ENCODE measurements at regions of chr6 and their contacts with region 1.

Region 1: GRCh38 chr6:16168858-16169257 is 40.0 kb downstream of the MYLIP start:
- DNase-seq: peak in 1 of 2 experiments; percentile 37
- H3K4me3 ChIP-seq: no peak overlapping the region
- H3K4me3 Mint-ChIP-seq: peak overlapping the region; percentile 65
- H3K27ac Mint-ChIP-seq: peak overlapping the region; percentile 88
- H3K4me1 ChIP-seq: peaks cover 74% of the 10 kb centered on the region
- H3K4me1 Mint-ChIP-seq: peaks cover 67% of the 10 kb centered on the region
- H3K27me3 ChIP-seq: no peaks in the 10 kb centered on the region
- H3K27me3 Mint-ChIP-seq: no peaks in the 10 kb centered on the region
- CTCF ChIP-seq: peak; percentile 27 to 57

Region 2: DNA sequence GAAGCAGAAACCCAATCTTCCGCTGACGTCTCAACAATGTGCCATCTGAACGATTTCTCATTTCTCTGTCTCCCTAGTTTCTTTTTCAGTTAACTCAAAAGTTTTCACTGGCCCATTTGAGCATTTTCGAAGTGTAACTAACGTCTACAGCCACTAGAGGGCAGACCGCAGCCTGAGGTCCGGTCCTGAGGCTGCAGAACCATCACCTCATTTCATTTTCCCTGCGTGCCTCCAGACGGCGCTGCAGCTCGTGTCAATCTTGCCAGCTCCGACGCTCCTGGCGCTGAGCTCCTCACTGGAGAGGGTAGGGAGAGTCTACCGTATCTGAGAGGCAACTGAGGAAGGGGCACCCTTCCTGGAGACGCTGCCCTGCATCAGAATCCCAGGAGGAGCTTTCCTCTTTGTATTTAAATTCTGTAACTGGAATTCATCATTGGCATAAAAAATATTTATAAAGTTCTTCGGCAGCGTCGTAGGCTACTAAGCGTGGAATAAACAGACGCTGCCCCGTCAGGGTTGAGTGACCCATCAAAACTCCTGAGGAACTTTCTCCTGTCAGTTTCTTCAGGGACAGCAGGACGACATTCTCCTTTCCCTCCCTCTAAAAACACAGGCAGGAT is 477.5 kb before region 1 on chr6:
- CTCF ChIA-PET with region 1: interaction called, 4 read pairs
- POLR2A ChIA-PET with region 1: no interaction called
- intact Hi-C with region 1: loop called (anchors 1 kb)
- DNase-seq: peak; percentile 81
- H3K4me3 ChIP-seq: no peak overlapping the region
- H3K4me3 Mint-ChIP-seq: peak overlapping the region; percentile 12
- H3K27ac Mint-ChIP-seq: no peak overlapping the region
- H3K4me1 ChIP-seq: 0 out of 2 replicates have a peak, but pooled peaks cover 5% of the 10 kb centered on the region
- H3K4me1 Mint-ChIP-seq: no peaks in the 10 kb centered on the region
- H3K27me3 ChIP-seq: no peaks in the 10 kb centered on the region
- H3K27me3 Mint-ChIP-seq: no peaks in the 10 kb centered on the region
- CTCF ChIP-seq: peak; percentile 99

Region 3: DNA sequence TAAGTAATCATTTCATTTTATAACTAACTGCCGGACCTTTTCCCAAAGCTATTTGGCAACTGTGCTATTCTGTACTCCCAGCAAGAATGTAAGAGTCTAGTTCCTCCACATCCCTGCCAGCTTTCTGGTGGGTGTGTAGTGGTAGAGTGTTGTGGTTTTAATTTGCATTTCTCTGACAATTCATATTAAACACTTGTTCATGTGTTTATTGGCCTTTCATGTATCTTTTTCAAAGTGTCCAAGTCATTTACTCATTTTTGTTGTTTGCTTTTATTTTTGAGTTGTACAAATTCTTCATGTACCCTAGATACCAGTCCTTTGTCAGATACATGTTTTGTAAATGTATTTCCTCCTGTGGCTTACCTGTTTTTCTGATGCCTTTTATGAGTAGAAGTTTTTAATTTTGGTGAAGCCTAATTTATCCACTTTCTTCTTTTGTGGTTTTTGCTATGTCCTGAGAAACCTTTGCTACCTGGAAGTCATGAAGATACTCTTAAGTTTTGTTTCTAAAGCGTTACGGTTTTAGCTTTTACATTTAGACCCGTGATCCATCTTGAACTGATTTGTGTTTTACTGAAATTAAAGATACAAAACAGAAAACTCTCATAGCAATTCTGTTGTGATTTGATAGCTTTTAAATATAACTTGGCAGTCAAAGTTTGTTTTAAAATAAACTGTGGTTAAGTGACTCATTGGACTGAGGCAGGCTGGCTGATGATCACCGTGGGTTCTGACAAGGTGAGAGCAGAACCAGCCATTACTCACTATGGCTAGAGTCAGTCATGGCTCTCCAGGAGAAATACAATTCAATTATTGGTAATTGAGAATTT is 32.0 kb before region 1 on chr6:
- CTCF ChIA-PET with region 1: interaction called, 11 read pairs
- POLR2A ChIA-PET with region 1: no interaction called
- intact Hi-C with region 1: no loop called
- DNase-seq: no peak
- H3K4me3 ChIP-seq: no peak overlapping the region
- H3K4me3 Mint-ChIP-seq: no peak overlapping the region
- H3K27ac Mint-ChIP-seq: no peak overlapping the region
- H3K4me1 ChIP-seq: peaks cover 20% of the 10 kb centered on the region
- H3K4me1 Mint-ChIP-seq: peaks cover 37% of the 10 kb centered on the region
- H3K27me3 ChIP-seq: no peaks in the 10 kb centered on the region
- H3K27me3 Mint-ChIP-seq: no peaks in the 10 kb centered on the region
- CTCF ChIP-seq: no peak

Region 4: GRCh38 chr6:16148498-16148897 is 20.4 kb before region 1 on chr6:
- CTCF ChIA-PET with region 1: no interaction called
- POLR2A ChIA-PET with region 1: interaction called, 4 read pairs
- intact Hi-C with region 1: loop called (anchors 1 kb)
- DNase-seq: peak; percentile 75 to 81
- H3K4me3 ChIP-seq: no peak overlapping the region
- H3K4me3 Mint-ChIP-seq: peak overlapping the region; percentile 3
- H3K27ac Mint-ChIP-seq: peak overlapping the region; percentile 11
- H3K4me1 ChIP-seq: peaks cover 15% of the 10 kb centered on the region
- H3K4me1 Mint-ChIP-seq: peaks cover 22% of the 10 kb centered on the region
- H3K27me3 ChIP-seq: no peaks in the 10 kb centered on the region
- H3K27me3 Mint-ChIP-seq: no peaks in the 10 kb centered on the region
- CTCF ChIP-seq: no peak